ENCODE measurements at regions of chr9 and their contacts with region 1.

Region 1: DNA sequence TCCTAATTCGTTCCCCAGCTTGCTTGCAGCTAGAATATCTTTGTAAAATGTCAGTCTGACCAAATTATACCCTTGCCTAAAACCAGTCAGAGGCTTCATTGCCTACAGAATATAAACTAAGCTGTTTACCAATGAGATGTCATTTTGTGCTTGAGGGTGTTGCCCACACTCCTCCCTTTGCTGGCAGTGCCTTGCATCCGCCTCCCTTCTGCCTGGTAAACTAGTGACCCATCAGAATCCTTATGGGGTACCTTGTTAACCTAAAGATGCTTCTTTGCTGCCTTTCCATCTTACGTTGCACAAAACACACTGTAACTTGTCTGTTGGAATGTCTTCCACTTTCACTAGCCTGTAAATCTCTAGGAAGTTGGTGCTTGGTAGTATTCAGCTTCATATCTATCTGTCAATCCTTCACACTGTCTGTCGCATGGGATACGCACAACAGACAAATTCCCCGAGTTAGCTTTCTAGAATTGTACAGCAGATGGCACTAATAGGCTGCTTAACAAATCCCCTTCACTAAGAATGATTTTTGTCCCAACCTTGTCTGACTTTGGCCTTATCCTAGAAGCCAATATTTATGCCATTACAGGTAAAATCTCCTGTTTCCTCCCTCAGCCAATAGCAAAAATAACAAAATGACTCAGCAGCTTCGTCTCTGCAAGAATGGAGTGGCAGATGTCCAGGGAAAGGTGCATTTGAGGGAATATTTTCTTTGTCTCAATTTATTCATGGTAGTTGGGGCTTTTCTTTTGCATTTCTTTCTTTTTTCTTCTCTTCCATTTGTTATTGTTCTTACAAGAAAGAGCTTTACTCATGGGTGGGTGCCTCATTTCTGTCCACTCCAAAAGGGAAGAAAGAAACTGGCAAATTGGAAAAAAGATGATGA is 3.0 kb downstream of the NUDT2 start:
- DNase-seq: no peak
- ATAC-seq: peak in 2 of 4 donors; percentile 19 to 28
- H3K4me3 ChIP-seq: no peak overlapping the region
- H3K27ac ChIP-seq: no peak overlapping the region
- H3K4me1 ChIP-seq: peaks cover 11 to 25% (median 13%) of the 10 kb centered on the region in 3 donors
- H3K27me3 ChIP-seq: no peaks in the 10 kb centered on the region
- CTCF ChIP-seq: peak in 3 of 4 donors; percentile 20 to 33 (median 28)

Region 2: GRCh38 chr9:34376596-34377403 is 44.5 kb after region 1 on chr9 and contains the start of gene MYORG:
- intact Hi-C with region 1: loop called in 2 of 3 experiments (anchors 2 to 5 kb)
- DNase-seq: peak; percentile 96 to 99 (median 98)
- ATAC-seq: peak; percentile 77 to 83 (median 80)
- H3K4me3 ChIP-seq: peak within 1 kb of the TSS; percentile 47 to 73 (median 54)
- H3K27ac ChIP-seq: peak within 1 kb of the TSS; percentile 60 to 91 (median 76)
- H3K4me1 ChIP-seq: peaks cover 11 to 23% (median 16%) of the 10 kb centered on the region in 3 donors
- H3K27me3 ChIP-seq: no peaks in the 10 kb centered on the region
- CTCF ChIP-seq: no peak
- total RNA-seq, gene MYORG: 4.0 to 17.5 (median 10.8) TPM

Region 3: DNA sequence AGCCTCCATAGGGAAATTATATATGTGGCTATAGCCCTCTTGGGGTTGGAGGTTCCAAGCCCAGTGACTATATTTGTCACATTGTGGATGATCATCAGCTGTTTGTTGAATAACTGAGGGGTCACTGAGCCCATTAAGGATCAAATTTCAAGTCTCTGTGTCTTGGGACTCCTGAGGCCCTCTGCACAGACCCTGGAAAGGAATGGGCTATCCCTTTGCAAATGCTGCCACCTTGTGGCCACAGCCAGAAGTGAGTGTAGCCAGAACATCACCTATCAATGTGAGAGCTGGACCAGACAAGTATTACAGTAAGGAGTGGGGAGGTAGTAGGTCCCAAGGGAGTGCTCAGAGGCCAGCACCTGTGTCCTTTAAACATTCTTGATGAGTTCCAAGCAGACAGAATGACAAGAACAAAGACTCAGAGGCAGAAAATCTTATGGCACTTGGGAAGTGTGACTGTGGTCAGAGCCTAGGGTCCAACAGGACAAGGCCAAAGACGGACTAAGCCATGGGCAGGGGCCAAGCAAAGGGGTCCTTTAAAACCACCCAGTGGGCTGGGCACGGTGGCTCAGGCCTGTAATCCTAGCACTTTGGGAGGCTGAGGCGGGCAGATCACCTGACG is 271.4 kb after region 1 on chr9:
- intact Hi-C with region 1: loop called in 1 of 3 experiments (anchors 5 kb)
- DNase-seq: peak; percentile 51 to 97 (median 82)
- ATAC-seq: peak; percentile 82 to 99 (median 94)
- H3K4me3 ChIP-seq: no peak overlapping the region
- H3K27ac ChIP-seq: no peak overlapping the region
- H3K4me1 ChIP-seq: no peaks in the 10 kb centered on the region
- H3K27me3 ChIP-seq: no peaks in the 10 kb centered on the region
- CTCF ChIP-seq: peak; percentile 88 to 89 (median 89)